ENCODE measurements at regions of chr2 and their contacts with region 1.

Region 1: GRCh38 chr2:191758518-191759507 is 80.9 kb downstream of the NABP1 start:
- DNase-seq: peak; percentile 73
- ATAC-seq: peak; percentile 99
- H3K4me3 ChIP-seq: no peak overlapping the region
- H3K4me3 Mint-ChIP-seq: peak overlapping the region; percentile 4
- H3K27ac ChIP-seq: no peak overlapping the region
- H3K27ac Mint-ChIP-seq: no peak overlapping the region
- H3K4me1 ChIP-seq: peaks cover 3% of the 10 kb centered on the region in 2 donors
- H3K4me1 Mint-ChIP-seq: peaks cover 5% of the 10 kb centered on the region
- H3K27me3 ChIP-seq: no peaks in the 10 kb centered on the region
- H3K27me3 Mint-ChIP-seq: no peaks in the 10 kb centered on the region
- CTCF ChIP-seq: peak; percentile 84

Region 2: DNA sequence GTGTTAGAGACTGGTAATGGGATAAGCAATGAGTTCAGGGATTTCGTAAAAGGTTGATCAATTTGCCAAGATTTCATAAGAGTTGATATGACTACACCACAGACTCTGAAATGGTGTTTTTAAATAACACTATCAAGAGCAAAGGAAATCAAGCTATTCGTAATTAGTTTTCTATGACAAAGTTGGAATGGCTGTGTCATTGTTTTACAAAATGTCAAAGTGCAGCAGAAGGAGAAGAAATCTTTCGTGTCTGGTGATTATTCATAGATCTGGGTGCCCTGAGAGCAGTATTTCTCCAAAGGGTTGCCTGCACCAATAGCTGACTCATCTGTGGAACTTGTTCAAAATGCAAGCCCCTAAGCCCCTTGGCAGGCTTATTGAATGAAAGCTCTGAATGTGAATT is 10.8 kb before region 1 on chr2:
- CTCF ChIA-PET with region 1: interaction called, 11 read pairs
- POLR2A ChIA-PET with region 1: no interaction called
- intact Hi-C with region 1: no loop called
- DNase-seq: no peak
- ATAC-seq: no peak
- H3K4me3 ChIP-seq: no peak overlapping the region
- H3K4me3 Mint-ChIP-seq: no peak overlapping the region
- H3K27ac ChIP-seq: no peak overlapping the region
- H3K27ac Mint-ChIP-seq: no peak overlapping the region
- H3K4me1 ChIP-seq: no peaks in the 10 kb centered on the region
- H3K4me1 Mint-ChIP-seq: no peaks in the 10 kb centered on the region
- H3K27me3 ChIP-seq: no peaks in the 10 kb centered on the region
- H3K27me3 Mint-ChIP-seq: peaks cover 2% of the 10 kb centered on the region
- CTCF ChIP-seq: no peak

Region 3: DNA sequence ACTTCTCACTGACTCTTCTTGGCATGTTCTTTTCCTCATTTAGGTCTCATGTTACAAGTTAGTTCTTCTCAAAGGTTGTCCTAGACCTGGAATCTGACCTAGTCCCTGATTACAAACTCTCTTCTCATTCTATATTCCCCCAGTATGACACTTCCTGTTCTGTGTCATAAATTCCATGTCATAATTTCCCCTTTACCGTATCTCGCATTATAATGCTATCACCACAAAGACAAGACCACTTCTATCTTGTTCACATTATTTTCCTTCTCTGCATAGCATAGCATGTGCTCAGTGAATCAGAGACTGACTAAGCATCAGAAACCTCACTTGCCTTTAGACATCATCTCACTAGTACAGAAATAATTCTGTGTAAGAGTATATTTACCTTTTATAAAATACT is 151.7 kb after region 1 on chr2:
- CTCF ChIA-PET with region 1: no interaction called
- POLR2A ChIA-PET with region 1: no interaction called
- intact Hi-C with region 1: no loop called
- DNase-seq: no peak
- ATAC-seq: no peak
- H3K4me3 ChIP-seq: no peak overlapping the region
- H3K4me3 Mint-ChIP-seq: no peak overlapping the region
- H3K27ac ChIP-seq: no peak overlapping the region
- H3K27ac Mint-ChIP-seq: no peak overlapping the region
- H3K4me1 ChIP-seq: no peaks in the 10 kb centered on the region
- H3K4me1 Mint-ChIP-seq: no peaks in the 10 kb centered on the region
- H3K27me3 ChIP-seq: no peaks in the 10 kb centered on the region
- H3K27me3 Mint-ChIP-seq: peaks cover 3% of the 10 kb centered on the region
- CTCF ChIP-seq: no peak

Measured in B cell (primary cell).